Activated naive CD4-positive, alpha-beta T cell treated with anti-CD3 and anti-CD28 coated beads for 36 hours (primary cell): ENCODE measurements at regions of chr12 and their contacts with region 1.

Region 1: DNA sequence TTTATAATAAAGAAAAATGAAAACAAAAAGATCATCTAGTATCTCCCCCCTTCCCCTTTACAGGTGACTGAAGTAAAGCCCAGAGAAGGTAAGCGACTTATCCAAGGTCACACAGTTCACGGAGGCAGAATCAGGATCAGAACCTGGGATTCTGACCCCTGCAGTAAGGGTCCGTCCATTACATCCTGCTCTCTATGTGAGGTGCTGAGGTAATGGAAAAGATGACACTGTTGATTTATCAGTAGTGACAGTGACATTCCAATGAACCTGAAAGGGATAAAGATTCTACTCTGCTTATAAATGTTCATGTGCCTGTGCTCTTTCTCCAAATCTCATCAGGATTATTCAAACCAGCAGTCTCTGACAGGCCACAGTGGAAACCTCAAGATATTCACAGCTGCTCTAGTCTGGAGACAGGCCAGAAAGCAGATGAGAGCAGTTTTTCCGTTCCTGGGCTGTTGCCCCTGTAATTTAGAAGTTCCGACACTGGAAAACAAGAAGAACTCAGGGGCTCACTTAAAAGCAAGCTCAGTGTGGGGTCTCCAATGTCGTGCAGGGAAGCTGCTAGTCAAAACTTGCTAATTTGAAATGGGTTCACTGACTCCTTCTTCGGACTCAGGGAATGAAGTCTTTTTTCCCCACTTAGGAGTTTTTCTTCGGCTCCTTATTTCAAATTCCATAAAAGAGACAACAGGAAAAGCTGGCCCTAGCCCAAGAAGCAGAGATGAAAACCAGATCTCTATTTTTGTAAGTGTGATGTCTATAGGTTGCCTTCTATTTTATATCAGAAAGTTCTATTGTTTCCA is 131.8 kb upstream of the EEA1 start:
- DNase-seq: no peak
- H3K4me3 Mint-ChIP-seq: no peak overlapping the region
- H3K27ac Mint-ChIP-seq: no peak overlapping the region
- H3K4me1 Mint-ChIP-seq: peaks cover 10% of the 10 kb centered on the region
- H3K27me3 Mint-ChIP-seq: peaks cover 21% of the 10 kb centered on the region

Region 2: GRCh38 chr12:92968176-92968813 is 92.6 kb before region 1 on chr12:
- CTCF ChIA-PET with region 1: no interaction called
- intact Hi-C with region 1: no loop called
- DNase-seq: no peak
- H3K4me3 Mint-ChIP-seq: no peak overlapping the region
- H3K27ac Mint-ChIP-seq: no peak overlapping the region
- H3K4me1 Mint-ChIP-seq: peaks cover 3% of the 10 kb centered on the region
- H3K27me3 Mint-ChIP-seq: no peaks in the 10 kb centered on the region

Region 3: DNA sequence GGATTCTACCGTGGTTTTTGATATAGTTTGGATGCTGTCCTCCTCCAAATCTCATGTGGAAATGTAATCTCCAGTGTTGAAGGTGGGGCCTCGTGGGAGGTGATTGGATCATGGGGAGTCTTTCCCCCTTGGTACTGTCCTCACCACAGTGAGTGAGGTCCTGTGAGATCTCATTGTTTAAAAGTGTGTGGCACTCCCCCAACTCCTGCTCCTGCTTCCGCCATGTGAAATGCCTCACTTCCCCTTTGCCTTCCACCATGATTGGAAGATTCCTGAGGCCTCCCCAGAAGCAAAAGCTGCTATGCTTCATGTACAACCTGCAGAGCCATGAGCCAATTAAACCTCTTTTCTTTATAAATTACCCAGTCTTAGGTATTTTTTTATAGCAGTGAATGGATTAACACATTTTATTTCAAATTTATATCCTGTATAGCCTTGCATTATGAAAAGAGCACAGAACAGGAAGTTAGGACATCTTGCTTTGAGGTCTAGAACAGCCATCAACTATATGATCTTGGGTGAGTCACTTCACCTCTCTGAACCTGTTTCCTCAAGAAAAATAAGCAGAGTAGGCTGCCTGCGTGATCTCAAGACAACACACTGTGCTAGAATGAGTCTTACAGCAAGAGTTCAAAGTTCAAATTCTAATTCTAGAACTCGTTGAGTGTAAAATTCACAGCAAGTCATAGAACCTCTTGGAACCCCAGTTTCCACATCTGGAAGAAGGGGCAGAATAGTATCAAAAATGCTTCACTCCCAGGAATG is 29.1 kb after region 1 on chr12:
- CTCF ChIA-PET with region 1: no interaction called
- intact Hi-C with region 1: loop called (anchors 2 kb)
- DNase-seq: peak; percentile 64
- H3K4me3 Mint-ChIP-seq: no peak overlapping the region
- H3K27ac Mint-ChIP-seq: peak overlapping the region; percentile 68
- H3K4me1 Mint-ChIP-seq: peaks cover 13% of the 10 kb centered on the region
- H3K27me3 Mint-ChIP-seq: no peaks in the 10 kb centered on the region